ENCODE measurements at regions of chr18 and their contacts with region 1.

Region 1: DNA sequence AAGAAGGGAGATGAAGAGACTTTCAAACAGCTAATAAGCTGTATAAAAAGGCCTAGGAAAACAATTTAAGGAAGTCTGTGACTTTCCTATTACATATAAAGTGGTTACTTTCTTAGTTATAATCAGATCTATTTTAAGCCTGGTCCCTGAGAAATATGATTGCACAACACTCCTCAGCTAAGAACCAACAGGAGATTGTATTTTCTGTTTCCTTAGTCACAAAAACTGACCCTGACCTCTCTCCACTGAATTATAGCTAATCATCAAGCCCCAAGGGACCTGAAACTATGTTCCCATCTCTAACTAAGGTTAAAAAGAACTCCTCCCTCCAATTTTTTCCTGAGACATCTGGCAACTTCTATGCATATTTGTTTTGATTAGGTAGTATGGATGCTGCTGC is 106.9 kb downstream of the ROCK1 start:
- DNase-seq: no peak
- H3K4me3 ChIP-seq: no peak overlapping the region
- H3K27ac ChIP-seq: peak overlapping the region in 3 of 4 donors; percentile 21 to 49 (median 36)
- H3K4me1 ChIP-seq: peaks cover 0 to 15% (median 3%) of the 10 kb centered on the region in 4 donors
- H3K27me3 ChIP-seq: no peaks in the 10 kb centered on the region
- CTCF ChIP-seq: no peak
- EP300 ChIP-seq: no peak
- POLR2A ChIP-seq: no peak

Region 2: DNA sequence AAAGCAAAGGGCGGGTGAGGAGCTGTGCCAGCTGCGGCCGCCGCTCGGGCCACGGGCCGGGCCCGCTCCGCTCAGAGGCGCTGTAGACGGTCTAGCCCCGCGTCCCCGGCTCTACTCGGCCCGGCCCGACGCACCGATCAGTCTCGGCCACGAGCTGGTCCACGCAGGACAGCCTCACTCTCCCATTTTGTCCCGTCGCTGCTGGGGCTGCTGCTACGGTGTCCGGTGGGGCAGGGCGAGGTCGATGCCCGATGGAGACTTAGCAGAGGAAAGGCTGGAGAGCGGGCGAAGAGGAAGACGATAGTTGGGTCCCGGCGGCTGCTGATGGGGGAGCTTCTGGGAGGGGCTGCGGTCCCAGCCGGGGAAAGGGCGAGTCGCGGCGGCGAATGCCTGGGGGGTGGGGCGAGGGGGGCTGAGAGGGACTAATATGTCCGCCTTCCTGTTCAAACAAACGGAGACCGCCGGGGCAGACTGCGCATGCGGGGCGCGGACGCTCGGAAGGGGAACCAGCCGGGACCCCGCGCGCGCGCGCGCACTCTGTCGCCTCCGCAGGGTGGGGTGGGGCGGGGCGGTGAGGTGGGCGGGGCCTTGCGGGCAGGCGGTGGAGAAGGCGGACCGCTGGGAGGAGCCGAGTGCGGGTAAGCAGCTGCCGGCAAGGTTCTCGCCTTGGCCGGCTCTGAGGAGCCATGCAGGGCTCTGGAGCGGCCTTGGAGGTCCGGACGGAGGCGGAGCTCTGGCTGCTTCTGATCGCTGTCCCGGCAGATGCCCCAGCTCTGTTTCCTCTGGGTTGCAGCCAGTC is 106.8 kb after region 1 on chr18 and contains the start of gene ROCK1:
- in situ Hi-C with region 1: no loop called
- intact Hi-C with region 1: loop called (anchors 10 kb)
- DNase-seq: peak; percentile 99
- H3K4me3 ChIP-seq: peak within 1 kb of the TSS; percentile 65 to 98 (median 87)
- H3K27ac ChIP-seq: peak within 1 kb of the TSS; percentile 93 to 99 (median 98)
- H3K4me1 ChIP-seq: peaks cover 16 to 45% (median 24%) of the 10 kb centered on the region in 4 donors
- H3K27me3 ChIP-seq: no peaks in the 10 kb centered on the region
- CTCF ChIP-seq: no peak
- EP300 ChIP-seq: no peak
- POLR2A ChIP-seq: peak; percentile 32
- total RNA-seq, gene ROCK1: 23.9 to 59.5 (median 39.6) TPM

Region 3: DNA sequence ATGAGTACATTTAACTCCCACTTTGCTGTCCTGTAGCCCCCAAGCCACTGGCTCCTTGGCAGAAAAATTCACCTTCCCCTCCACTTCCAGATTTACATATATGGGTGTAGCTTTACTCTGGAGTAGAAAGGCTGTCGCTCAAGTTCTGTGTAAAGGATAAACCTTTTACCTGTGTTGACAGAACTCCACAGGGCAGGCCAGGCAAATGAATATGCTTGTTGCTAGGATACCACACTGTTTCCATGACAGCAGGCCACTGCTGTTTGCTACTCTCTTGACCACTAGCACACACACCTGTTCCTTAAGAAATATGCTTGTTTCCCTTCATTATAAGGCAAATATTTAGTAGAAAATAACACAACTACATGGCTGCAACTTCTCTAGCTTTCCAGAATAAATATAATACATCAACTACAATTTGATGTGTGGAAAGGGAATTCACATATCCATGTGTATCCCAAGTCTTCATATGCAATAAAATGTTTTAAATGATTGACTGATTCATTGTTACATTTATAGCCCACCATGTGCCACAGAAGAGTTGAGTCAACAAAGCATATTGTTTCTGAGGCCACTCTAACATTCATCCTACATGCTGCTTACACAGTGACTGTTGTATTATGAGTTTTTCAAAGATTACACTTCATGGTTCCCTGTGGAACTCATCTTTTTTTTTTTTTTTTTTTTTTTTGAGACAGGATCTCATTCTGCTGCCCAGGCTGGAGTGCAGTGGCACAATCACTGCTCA is 163.1 kb after region 1 on chr18:
- in situ Hi-C with region 1: no loop called
- intact Hi-C with region 1: no loop called
- DNase-seq: peak; percentile 51
- H3K4me3 ChIP-seq: no peak overlapping the region
- H3K27ac ChIP-seq: peak overlapping the region in 3 of 4 donors; percentile 26 to 43 (median 33)
- H3K4me1 ChIP-seq: peaks cover 0 to 14% (median 0%) of the 10 kb centered on the region in 4 donors
- H3K27me3 ChIP-seq: no peaks in the 10 kb centered on the region
- CTCF ChIP-seq: no peak
- EP300 ChIP-seq: no peak
- POLR2A ChIP-seq: no peak